ENCODE measurements at regions of chr1 and their contacts with region 1.

Region 1: GRCh38 chr1:173946380-173946921 is 29.3 kb upstream of the SERPINC1 start:
- DNase-seq: no peak
- ATAC-seq: no peak
- H3K4me3 ChIP-seq: no peak overlapping the region
- H3K27ac ChIP-seq: no peak overlapping the region
- H3K4me1 ChIP-seq: no peaks in the 10 kb centered on the region
- H3K27me3 ChIP-seq: no peaks in the 10 kb centered on the region
- CTCF ChIP-seq: no peak

Region 2: GRCh38 chr1:173476664-173477285 is 469.7 kb before region 1 on chr1:
- intact Hi-C with region 1: no loop called
- DNase-seq: peak; percentile 88 to 95 (median 92)
- ATAC-seq: peak; percentile 83 to 89 (median 85)
- H3K4me3 ChIP-seq: peak overlapping the region; percentile 61 to 89 (median 70)
- H3K27ac ChIP-seq: peak overlapping the region; percentile 91 to 99 (median 96)
- H3K4me1 ChIP-seq: peaks cover 20 to 49% (median 24%) of the 10 kb centered on the region in 3 donors
- H3K27me3 ChIP-seq: no peaks in the 10 kb centered on the region
- CTCF ChIP-seq: no peak

Region 3: GRCh38 chr1:173997796-173998195 is 51.3 kb after region 1 on chr1:
- intact Hi-C with region 1: loop called in 1 of 3 experiments (anchors 5 kb)
- DNase-seq: no peak
- ATAC-seq: no peak
- H3K4me3 ChIP-seq: no peak overlapping the region
- H3K27ac ChIP-seq: no peak overlapping the region
- H3K4me1 ChIP-seq: peaks cover 0 to 11% (median 11%) of the 10 kb centered on the region in 3 donors
- H3K27me3 ChIP-seq: no peaks in the 10 kb centered on the region
- CTCF ChIP-seq: no peak

Region 4: DNA sequence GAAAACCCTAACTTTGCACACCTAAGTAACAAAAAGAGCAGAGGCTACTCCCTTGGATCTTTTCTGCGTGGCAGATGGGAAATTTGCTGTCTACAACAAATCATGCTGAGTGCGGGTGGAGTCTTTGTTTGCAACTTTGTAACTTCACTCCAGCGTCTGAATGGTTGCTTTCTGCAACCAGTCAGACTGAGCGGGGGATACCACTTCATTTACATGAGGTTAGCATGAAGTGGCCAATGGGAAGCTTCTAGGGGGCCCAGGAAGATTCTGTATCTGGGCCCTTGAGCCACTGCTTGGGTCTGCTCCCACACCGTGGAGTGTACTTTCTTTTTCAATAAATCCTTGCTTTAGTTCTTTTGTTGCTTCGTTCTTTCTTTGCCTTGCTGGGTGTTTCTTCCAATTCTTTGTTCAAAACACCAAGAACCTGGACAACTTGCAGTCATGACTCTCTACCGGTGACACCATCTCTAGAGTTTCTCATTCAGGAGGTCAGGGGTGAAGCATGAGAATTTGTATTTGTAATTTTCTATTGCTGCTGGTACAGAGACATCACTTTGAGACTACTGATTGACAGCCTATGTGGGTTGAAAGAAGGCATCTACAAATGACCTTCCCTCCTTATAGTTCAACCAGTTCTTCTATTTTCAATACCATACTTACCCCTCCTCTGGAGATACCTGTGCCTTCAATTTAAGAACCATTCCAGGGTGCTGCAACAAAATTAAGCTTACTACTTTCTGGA is 131.5 kb after region 1 on chr1:
- intact Hi-C with region 1: no loop called
- DNase-seq: no peak
- ATAC-seq: no peak
- H3K4me3 ChIP-seq: no peak overlapping the region
- H3K27ac ChIP-seq: no peak overlapping the region
- H3K4me1 ChIP-seq: no peaks in the 10 kb centered on the region
- H3K27me3 ChIP-seq: no peaks in the 10 kb centered on the region
- CTCF ChIP-seq: no peak

Measured in pancreas (tissue), 10 donors.